ENCODE measurements at regions of chr11 and their contacts with region 1.

Region 1: GRCh38 chr11:60913793-60914632 is at the start of gene TMEM109:
- DNase-seq: peak; percentile 80 to 95 (median 85)
- ATAC-seq: peak; percentile 67
- H3K4me3 ChIP-seq: peak within 1 kb of the TSS; percentile 95
- H3K4me3 Mint-ChIP-seq: peak within 1 kb of the TSS; percentile 98
- H3K27ac ChIP-seq: peak within 1 kb of the TSS; percentile 97 to 98
- H3K27ac Mint-ChIP-seq: peak within 1 kb of the TSS; percentile 92
- H3K4me1 ChIP-seq: peaks cover 68% of the 10 kb centered on the region
- H3K4me1 Mint-ChIP-seq: peaks cover 65% of the 10 kb centered on the region
- H3K27me3 ChIP-seq: no peaks in the 10 kb centered on the region
- H3K27me3 Mint-ChIP-seq: no peaks in the 10 kb centered on the region
- CTCF ChIP-seq: no peak
- total RNA-seq, gene TMEM109: 27.8 to 32.9 TPM

Region 2: DNA sequence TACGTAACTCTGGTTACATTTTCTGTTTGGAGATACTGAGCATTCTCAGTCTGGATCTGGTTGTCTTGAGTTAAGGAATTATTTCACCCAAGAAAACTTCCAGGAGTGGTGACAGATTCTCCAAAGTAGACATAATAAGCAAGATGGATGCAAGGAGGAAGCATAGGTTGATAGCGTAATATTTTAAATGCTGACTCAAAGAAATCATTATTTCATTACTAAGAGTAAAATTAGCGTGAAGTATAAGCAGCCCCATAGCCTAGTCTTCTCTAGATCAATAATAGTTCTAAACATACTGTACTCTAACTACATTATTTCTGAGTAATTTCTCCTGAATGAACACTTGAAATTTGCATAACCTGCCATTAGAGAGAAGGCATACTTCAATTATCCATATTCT is 272.1 kb before region 1 on chr11:
- CTCF ChIA-PET with region 1: no interaction called
- POLR2A ChIA-PET with region 1: no interaction called
- intact Hi-C with region 1: no loop called
- DNase-seq: no peak
- ATAC-seq: no peak
- H3K4me3 ChIP-seq: no peak overlapping the region
- H3K4me3 Mint-ChIP-seq: no peak overlapping the region
- H3K27ac ChIP-seq: no peak overlapping the region
- H3K27ac Mint-ChIP-seq: no peak overlapping the region
- H3K4me1 ChIP-seq: no peaks in the 10 kb centered on the region
- H3K4me1 Mint-ChIP-seq: no peaks in the 10 kb centered on the region
- H3K27me3 ChIP-seq: no peaks in the 10 kb centered on the region
- H3K27me3 Mint-ChIP-seq: peaks cover 8% of the 10 kb centered on the region
- CTCF ChIP-seq: no peak

Region 3: DNA sequence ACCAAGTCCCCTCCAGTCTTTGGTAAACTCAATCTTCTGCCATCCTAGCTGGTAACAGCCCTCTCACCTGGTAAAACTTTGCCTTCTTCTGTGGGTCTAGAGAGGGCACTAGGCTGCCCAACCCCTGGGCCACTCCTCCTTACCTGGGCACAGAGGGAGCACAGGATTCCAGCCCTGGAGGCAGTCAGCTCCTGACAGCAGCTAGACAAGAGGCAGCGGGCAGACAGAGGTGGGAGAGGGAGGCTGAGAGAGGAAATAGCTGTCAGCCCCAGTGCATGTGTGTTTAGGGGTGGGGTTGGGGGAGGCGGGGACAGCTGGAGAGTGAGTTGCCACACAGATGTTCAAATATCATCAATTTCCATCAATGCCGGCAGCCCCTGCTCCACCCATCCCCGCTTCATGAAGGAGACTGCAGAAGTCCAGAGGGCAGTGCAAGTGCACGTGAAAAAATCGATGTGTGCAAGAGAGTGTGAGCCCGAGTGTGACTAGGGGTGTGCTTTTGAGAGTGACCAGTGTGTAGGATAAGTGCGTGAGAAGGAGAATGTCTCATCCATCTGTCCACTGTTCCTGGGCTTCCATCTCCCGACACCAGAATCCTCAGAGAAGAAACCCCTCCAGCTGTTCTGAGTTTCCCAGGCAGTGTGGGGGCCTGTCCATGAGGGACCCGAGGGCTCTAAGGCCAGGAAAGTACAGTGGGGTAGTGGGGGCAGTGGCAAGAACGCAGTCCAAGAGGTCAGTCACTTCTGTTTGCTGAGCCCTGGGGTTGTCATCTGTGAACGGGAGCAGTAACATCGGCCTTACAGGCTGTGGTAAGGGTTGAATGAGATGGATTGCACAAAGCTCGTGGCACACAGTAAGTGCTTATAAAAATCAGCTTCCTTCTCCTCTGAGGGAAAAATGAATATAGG is 58.0 kb before region 1 on chr11 and contains the start of gene PTGDR2:
- CTCF ChIA-PET with region 1: no interaction called
- POLR2A ChIA-PET with region 1: no interaction called
- intact Hi-C with region 1: no loop called
- DNase-seq: no peak
- ATAC-seq: peak; percentile 44
- H3K4me3 ChIP-seq: peak within 1 kb of the TSS; percentile 7
- H3K4me3 Mint-ChIP-seq: peak within 1 kb of the TSS; percentile 48
- H3K27ac ChIP-seq: no peak within 1 kb of the TSS
- H3K27ac Mint-ChIP-seq: peak within 1 kb of the TSS; percentile 32
- H3K4me1 ChIP-seq: peaks cover 11% of the 10 kb centered on the region
- H3K4me1 Mint-ChIP-seq: peaks cover 20% of the 10 kb centered on the region
- H3K27me3 ChIP-seq: no peaks in the 10 kb centered on the region
- H3K27me3 Mint-ChIP-seq: no peaks in the 10 kb centered on the region
- CTCF ChIP-seq: no peak
- total RNA-seq, gene PTGDR2: 0.36 TPM

Region 4: DNA sequence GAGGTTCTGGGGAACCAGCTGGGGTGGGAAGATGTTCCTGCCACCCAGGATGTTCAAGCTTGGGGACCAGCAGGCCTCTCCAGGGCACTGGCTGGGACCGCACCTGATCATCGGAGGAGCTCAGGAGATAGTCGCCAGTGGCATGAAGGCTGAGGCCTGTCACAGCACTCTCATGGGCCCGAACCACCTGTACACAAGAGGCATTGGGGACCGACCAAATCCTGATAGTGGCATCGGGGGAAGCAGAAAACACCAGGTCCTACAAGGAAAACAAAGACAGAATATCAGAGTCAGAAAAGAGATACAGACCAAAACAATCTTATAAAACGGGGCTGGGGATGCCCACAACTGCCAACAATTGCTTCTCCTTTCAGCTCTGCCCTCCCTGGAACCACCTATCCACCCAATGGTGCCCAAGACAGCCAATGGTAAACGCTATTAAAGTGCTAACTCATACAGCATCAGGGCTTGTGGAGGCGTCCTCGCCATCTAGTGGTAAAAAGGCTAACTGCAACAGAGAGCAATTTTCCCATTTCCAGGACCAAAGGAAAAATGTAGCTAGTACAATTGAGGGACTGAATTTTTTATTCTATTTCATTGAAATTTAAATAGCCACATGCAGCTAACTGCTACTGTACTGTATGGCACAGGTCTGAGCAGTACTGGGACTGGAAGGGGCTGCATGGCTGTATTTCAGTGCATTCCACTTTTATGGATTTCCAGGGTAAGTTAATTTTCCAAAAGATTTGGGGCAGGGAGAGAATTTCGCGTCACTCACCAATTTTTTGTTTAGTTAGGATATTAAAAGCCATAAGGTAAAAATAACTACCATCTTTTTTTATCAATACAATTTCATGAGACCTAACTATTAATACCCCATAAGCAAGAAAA is 14.7 kb before region 1 on chr11:
- CTCF ChIA-PET with region 1: interaction called, 30 read pairs
- POLR2A ChIA-PET with region 1: interaction called, 43 read pairs
- intact Hi-C with region 1: no loop called
- DNase-seq: peak in 5 of 14 experiments; percentile 11 to 76 (median 41)
- ATAC-seq: peak; percentile 70
- H3K4me3 ChIP-seq: no peak overlapping the region
- H3K4me3 Mint-ChIP-seq: no peak overlapping the region
- H3K27ac ChIP-seq: no peak overlapping the region
- H3K27ac Mint-ChIP-seq: no peak overlapping the region
- H3K4me1 ChIP-seq: peaks cover 11% of the 10 kb centered on the region
- H3K4me1 Mint-ChIP-seq: peaks cover 21% of the 10 kb centered on the region
- H3K27me3 ChIP-seq: no peaks in the 10 kb centered on the region
- H3K27me3 Mint-ChIP-seq: no peaks in the 10 kb centered on the region
- CTCF ChIP-seq: peak; percentile 90

Region 5: DNA sequence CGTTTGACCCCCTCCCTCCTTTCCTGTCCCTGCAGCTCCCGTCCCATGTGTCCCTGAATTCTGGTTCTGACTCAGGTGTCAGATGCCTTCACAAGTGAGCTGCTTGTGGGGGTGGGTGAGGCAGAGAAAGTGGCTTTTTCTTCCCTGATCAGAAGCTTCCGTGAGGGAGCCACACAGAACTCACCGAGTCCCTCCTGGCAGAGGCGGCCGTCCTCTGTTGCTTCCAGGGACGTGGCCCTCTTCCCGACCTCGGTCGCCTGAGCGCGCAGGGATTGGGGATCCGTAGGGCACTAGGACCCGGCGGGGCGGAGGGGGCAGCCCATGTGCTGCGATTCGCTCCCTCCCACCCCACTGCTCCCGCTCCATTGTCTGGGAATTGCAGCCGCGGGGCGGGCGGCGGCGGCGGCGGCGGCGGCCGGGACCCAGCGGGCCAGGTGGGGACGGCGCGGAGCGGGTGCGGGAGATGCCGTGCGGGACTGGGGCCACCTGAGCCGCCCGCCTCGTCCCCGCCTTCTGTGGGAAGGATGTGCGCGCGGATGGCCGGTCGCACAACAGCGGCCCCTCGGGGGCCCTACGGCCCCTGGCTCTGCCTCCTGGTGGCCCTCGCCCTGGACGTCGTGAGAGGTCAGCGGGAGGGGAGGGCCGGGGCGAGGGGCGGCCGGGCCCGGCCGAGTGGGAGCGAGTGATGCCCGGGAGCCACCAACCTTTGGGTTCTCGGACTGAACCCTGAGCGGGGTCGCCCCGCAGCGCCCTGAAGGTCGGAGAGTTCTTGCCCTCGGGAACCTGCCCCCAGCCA is 10.3 kb after region 1 on chr11 and contains the start of gene TMEM132A:
- CTCF ChIA-PET with region 1: interaction called, 4 read pairs
- POLR2A ChIA-PET with region 1: interaction called, 19 read pairs
- intact Hi-C with region 1: no loop called
- DNase-seq: peak in 2 of 14 experiments; percentile 30 to 34
- ATAC-seq: peak; percentile 63
- H3K4me3 ChIP-seq: peak within 1 kb of the TSS; percentile 45
- H3K4me3 Mint-ChIP-seq: peak within 1 kb of the TSS; percentile 65
- H3K27ac ChIP-seq: no peak within 1 kb of the TSS
- H3K27ac Mint-ChIP-seq: no peak within 1 kb of the TSS
- H3K4me1 ChIP-seq: peaks cover 26% of the 10 kb centered on the region
- H3K4me1 Mint-ChIP-seq: peaks cover 5% of the 10 kb centered on the region
- H3K27me3 ChIP-seq: peaks cover 25 to 28% of the 10 kb centered on the region in 2 experiments
- H3K27me3 Mint-ChIP-seq: peaks cover 37% of the 10 kb centered on the region
- CTCF ChIP-seq: no peak
- total RNA-seq, gene TMEM132A: not detected

Region 6: DNA sequence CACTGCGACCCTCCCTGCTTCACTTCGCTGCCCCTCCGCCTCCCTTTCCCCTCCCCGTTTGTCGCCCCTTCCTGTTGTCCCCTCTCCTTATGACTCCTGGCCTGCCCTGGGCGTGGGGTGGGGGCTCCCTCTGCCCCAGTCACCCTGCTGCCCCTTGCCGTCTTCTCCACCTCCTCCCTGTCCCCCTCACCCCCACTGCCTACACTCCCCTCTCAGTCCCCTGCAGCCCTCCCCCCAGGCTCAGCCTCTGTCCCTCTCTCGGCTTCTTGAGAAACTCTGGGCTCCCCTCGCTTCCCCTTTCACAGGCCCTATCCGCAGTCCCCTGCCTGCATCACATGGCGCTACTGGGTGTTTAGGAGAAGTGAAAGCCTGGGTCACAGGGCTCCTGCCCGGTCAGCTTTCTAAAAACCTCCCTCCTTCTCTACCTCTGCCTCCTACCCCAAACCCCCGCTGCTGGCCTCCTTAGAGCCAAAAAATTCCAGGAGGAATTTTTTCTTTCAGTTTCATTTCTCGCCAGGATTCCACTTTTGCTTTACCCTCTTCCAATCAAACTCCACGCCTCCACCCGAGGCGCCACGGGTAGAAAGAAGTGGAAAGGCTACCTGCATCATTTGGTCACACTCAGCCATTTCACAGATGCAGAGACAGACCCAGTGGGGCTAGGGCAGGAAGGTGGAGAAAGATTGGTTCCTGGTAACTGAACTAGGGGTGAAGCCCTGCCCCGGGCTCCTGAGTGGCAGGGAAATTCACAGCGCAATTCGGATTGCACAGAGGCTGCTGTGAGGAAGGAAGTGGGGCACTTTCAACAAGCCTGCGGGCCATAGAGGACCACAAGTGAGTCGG is 38.1 kb after region 1 on chr11 and contains the start of gene SLC15A3:
- CTCF ChIA-PET with region 1: interaction called, 5 read pairs
- POLR2A ChIA-PET with region 1: interaction called, 3 read pairs
- intact Hi-C with region 1: loop called in 1 of 2 experiments (anchors 5 kb)
- DNase-seq: peak in 10 of 14 experiments; percentile 19 to 78 (median 44)
- ATAC-seq: peak; percentile 79
- H3K4me3 ChIP-seq: peak within 1 kb of the TSS; percentile 51
- H3K4me3 Mint-ChIP-seq: peak within 1 kb of the TSS; percentile 89
- H3K27ac ChIP-seq: peak within 1 kb of the TSS; percentile 4 to 73
- H3K27ac Mint-ChIP-seq: peak within 1 kb of the TSS; percentile 79
- H3K4me1 ChIP-seq: peaks cover 29% of the 10 kb centered on the region
- H3K4me1 Mint-ChIP-seq: peaks cover 35% of the 10 kb centered on the region
- H3K27me3 ChIP-seq: peaks cover 0 to 13% of the 10 kb centered on the region in 2 experiments
- H3K27me3 Mint-ChIP-seq: peaks cover 8% of the 10 kb centered on the region
- CTCF ChIP-seq: no peak
- total RNA-seq, gene SLC15A3: 10.5 to 11.9 TPM

Region 7: DNA sequence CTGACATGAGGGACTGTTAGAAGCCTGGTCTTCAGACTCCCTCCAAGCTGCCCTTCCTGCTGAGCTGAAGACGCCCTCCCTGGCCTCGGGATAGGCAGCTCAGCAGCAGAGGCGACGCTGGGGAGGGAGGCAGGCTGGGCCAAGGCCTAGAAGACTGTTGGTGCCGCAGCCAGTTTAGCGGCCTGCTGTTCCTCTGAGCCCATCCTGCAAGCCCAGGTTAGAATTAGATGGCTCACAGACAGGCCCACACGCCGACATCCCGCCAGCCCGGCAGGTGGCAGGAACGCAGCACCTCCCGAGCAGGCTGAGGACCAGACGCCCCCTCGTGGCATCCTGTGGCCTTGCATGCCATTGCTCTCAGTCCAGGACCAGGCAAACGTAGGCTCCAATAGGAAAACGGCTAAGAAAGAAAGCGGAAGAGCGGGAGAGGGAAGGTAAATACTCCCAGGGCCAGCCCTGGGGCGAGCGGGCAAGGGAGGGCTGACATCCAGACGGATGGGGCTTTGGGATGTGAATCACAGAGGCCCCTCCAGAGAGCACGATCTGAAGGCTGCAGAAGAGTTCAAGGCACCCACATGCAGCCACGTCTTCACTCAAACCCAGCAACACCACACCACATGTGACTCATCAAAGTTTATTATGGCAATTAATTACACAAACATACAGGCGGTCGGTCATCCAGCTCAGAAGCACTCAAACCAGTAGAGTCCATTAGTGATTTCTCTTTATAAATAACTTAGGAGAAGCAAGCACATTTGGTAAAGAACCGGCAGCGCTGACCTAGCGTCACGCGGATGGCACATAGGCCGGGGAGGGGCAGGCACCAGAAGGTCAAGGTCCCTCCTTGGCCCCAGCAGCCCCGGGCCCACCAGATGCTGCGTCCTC is 215.9 kb after region 1 on chr11:
- CTCF ChIA-PET with region 1: no interaction called
- POLR2A ChIA-PET with region 1: interaction called, 3 read pairs
- intact Hi-C with region 1: loop called (anchors 1 to 2 kb)
- DNase-seq: peak; percentile 86 to 94 (median 88)
- ATAC-seq: peak; percentile 84
- H3K4me3 ChIP-seq: no peak overlapping the region
- H3K4me3 Mint-ChIP-seq: peak overlapping the region; percentile 52
- H3K27ac ChIP-seq: peak overlapping the region; percentile 29 to 50
- H3K27ac Mint-ChIP-seq: peak overlapping the region; percentile 50
- H3K4me1 ChIP-seq: peaks cover 25% of the 10 kb centered on the region
- H3K4me1 Mint-ChIP-seq: peaks cover 39% of the 10 kb centered on the region
- H3K27me3 ChIP-seq: no peaks in the 10 kb centered on the region
- H3K27me3 Mint-ChIP-seq: no peaks in the 10 kb centered on the region
- CTCF ChIP-seq: peak; percentile 99

Measured in CD4-positive, alpha-beta T cell (primary cell).